ENCODE measurements at regions of chr10 and their contacts with region 1.

Region 1: DNA sequence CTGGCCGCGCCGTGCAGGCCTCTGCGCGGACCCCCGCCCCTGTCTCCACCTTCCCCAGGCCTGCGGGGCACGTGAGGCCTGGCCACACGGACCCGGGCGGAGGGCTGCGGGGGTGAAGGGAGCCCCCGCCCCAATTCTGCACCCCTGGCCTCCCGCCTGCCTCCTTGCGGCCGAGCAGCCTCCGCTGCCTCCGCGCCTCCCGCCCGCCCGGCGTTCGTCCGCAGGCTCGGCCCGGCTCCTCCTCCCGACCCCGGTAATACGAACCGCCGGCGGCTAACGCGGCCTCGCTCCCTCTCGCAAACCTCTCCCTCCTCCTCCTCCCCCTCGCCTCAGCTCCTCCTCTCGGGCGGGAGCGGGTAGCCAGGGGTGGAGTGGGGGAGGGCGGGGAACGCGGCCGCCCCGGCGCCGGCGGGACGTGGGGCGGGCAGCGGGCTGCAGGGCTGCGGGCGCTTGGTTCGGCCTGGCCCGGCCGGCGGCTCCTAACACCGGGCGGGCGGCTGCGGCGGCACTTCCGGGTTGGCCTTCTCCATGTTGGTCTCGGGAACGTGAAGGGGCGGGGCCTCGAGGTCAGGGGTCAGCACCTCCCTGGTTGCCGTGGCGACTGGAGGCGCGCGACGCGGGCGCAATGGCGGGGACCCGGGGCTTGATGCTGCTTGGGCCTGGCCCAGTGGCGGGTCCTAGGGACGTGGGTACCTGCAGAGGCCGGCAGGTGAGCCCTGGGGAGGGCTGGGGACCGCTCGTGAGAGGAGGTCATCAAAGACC is at the start of gene RAB11FIP2:
- DNase-seq: peak; percentile 97
- H3K4me3 Mint-ChIP-seq: peak within 1 kb of the TSS; percentile 86
- H3K27ac Mint-ChIP-seq: peak within 1 kb of the TSS; percentile 72
- H3K4me1 Mint-ChIP-seq: peaks cover 37% of the 10 kb centered on the region
- H3K27me3 Mint-ChIP-seq: no peaks in the 10 kb centered on the region
- total RNA-seq, gene RAB11FIP2: 9.9 to 11.6 TPM

Region 2: DNA sequence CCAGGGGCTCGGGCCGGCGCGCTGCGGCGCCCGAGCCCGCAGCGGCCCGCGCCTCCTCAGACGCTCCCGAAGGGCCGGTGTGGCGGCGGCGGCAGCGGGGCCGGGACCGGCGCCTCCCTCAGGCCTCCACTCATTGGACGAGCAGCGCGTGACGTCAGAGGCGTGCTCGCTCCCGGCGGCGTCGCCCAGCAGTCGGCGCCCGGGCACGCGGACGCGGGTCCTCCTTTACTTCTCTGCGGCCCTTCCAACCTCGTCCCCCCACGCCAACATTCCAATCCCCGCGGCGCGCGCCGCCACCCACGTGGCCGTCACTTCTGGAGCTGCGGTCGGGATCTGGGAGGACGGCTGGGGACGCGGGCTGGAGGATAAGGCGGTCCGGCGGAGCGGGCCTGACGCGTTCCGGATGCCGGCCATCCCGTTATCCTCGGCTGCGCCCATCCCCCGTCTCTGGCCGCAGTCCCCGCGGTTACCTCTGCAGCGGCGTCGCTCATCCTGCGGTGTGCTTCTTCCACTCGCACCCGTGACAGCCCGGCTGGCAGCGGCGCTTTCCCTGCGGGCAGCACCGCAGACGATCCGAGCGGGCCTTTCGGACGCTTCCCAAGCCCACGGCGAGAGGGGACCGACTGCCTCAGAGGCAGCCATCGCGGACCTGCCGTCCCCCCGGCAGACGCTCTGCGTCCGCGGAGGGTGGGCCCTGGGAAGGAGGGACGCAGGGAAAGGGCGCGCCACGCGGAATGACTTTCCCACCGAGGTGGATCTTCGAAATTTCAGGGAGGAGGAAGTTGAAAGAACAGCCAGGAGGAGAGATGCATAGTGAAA is 671.0 kb before region 1 on chr10 and contains the start of gene PDZD8:
- CTCF ChIA-PET with region 1: interaction called, 4 read pairs
- intact Hi-C with region 1: loop called (anchors 2 kb)
- DNase-seq: peak; percentile 85
- H3K4me3 Mint-ChIP-seq: peak within 1 kb of the TSS; percentile 94
- H3K27ac Mint-ChIP-seq: peak within 1 kb of the TSS; percentile 68
- H3K4me1 Mint-ChIP-seq: peaks cover 19% of the 10 kb centered on the region
- H3K27me3 Mint-ChIP-seq: peaks cover 18% of the 10 kb centered on the region
- total RNA-seq, gene PDZD8: 13.6 to 15.8 TPM

Region 3: DNA sequence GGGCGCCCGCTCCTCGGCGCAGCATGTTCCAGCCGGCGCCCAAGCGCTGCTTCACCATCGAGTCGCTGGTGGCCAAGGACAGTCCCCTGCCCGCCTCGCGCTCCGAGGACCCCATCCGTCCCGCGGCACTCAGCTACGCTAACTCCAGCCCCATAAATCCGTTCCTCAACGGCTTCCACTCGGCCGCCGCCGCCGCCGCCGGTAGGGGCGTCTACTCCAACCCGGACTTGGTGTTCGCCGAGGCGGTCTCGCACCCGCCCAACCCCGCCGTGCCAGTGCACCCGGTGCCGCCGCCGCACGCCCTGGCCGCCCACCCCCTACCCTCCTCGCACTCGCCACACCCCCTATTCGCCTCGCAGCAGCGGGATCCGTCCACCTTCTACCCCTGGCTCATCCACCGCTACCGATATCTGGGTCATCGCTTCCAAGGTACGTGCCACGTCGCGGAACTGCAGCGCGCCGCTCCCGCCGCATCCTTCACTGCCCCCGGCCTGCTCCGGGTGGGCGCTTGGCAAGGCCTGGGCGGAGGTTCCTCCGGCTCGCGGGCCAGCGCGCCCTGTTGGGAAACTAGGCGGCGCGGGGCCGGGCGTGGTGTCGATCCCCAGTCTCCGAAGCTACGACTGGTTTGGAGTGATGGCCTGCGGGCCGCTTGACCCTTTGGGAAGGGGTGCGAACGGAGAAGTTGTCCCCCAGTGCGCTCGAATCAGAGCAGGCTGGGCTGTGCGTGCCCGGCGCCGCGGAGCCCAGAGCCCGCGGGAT is 503.2 kb before region 1 on chr10:
- CTCF ChIA-PET with region 1: no interaction called
- intact Hi-C with region 1: loop called (anchors 5 kb)
- DNase-seq: peak; percentile 39
- H3K4me3 Mint-ChIP-seq: peak overlapping the region; percentile 53
- H3K27ac Mint-ChIP-seq: no peak overlapping the region
- H3K4me1 Mint-ChIP-seq: peaks cover 44% of the 10 kb centered on the region
- H3K27me3 Mint-ChIP-seq: peaks cover 76% of the 10 kb centered on the region

Region 4: DNA sequence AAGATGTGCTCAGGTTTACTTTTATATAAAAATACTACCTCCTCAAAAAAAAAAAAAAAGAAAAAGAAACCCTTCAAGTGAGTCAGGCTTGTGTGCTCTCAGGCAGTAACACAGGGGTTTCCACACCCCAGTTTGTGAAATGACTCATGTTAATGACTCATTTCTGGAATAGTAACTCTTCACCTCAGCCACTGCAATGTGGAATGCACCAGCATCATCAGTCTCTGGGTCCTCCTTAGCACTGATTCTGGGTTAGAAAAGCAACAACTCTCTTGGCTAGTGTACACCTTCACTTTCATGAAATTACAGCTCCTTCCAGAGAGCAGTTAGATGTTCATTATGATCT is 393.4 kb before region 1 on chr10:
- CTCF ChIA-PET with region 1: no interaction called
- intact Hi-C with region 1: loop called (anchors 10 kb)
- DNase-seq: peak; percentile 65
- H3K4me3 Mint-ChIP-seq: no peak overlapping the region
- H3K27ac Mint-ChIP-seq: no peak overlapping the region
- H3K4me1 Mint-ChIP-seq: peaks cover 25% of the 10 kb centered on the region
- H3K27me3 Mint-ChIP-seq: peaks cover 26% of the 10 kb centered on the region

Region 5: GRCh38 chr10:117830787-117831212 is 215.8 kb before region 1 on chr10:
- CTCF ChIA-PET with region 1: no interaction called
- intact Hi-C with region 1: loop called (anchors 5 kb)
- DNase-seq: peak; percentile 49
- H3K4me3 Mint-ChIP-seq: peak overlapping the region; percentile 68
- H3K27ac Mint-ChIP-seq: peak overlapping the region; percentile 82
- H3K4me1 Mint-ChIP-seq: peaks cover 12% of the 10 kb centered on the region
- H3K27me3 Mint-ChIP-seq: peaks cover 2% of the 10 kb centered on the region

Region 6: DNA sequence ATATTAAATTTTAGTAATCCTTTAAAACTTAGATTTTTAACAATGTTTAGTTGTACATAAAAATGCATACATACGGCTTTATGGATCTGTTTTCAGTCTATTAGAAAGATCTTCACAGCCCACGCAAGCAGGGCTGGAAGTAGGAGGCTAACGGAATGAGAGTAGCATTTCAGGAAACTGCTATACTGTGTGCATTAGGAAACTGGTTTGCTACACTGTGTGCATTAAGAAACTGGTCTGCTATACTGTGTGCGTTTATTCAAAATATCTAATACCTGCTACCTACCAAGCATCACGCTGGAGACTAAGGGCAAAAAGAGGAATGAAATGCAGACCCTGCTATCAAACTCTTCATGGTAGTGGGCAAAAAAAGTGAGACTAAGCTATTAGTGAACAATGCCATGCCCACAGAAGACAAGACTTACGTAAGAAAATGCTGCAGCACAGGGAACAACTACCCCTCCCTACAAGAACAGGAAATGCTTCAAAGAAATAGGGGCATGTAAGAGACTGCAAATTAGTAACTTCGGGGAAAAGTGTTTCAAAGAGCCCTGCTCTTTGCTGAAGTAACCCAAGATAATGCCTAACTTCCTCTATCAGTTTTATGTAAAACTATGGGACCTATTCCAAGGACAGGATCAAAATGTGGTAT is 11.1 kb before region 1 on chr10:
- CTCF ChIA-PET with region 1: no interaction called
- intact Hi-C with region 1: loop called (anchors 1 kb)
- DNase-seq: no peak
- H3K4me3 Mint-ChIP-seq: no peak overlapping the region
- H3K27ac Mint-ChIP-seq: no peak overlapping the region
- H3K4me1 Mint-ChIP-seq: peaks cover 30% of the 10 kb centered on the region
- H3K27me3 Mint-ChIP-seq: no peaks in the 10 kb centered on the region

Region 7: GRCh38 chr10:118341791-118342637 is 295.4 kb after region 1 on chr10 and contains the start of gene FAM204A:
- CTCF ChIA-PET with region 1: no interaction called
- intact Hi-C with region 1: loop called (anchors 1 kb)
- DNase-seq: peak; percentile 98
- H3K4me3 Mint-ChIP-seq: peak within 1 kb of the TSS; percentile 95
- H3K27ac Mint-ChIP-seq: peak within 1 kb of the TSS; percentile 86
- H3K4me1 Mint-ChIP-seq: peaks cover 41% of the 10 kb centered on the region
- H3K27me3 Mint-ChIP-seq: no peaks in the 10 kb centered on the region
- total RNA-seq, gene FAM204A: 60.5 to 67.1 TPM

Region 8: GRCh38 chr10:118511711-118512110 is 465.1 kb after region 1 on chr10:
- CTCF ChIA-PET with region 1: no interaction called
- intact Hi-C with region 1: no loop called
- DNase-seq: no peak
- H3K4me3 Mint-ChIP-seq: no peak overlapping the region
- H3K27ac Mint-ChIP-seq: no peak overlapping the region
- H3K4me1 Mint-ChIP-seq: peaks cover 2% of the 10 kb centered on the region
- H3K27me3 Mint-ChIP-seq: peaks cover 9% of the 10 kb centered on the region

Measured in activated naive CD4-positive, alpha-beta T cell treated with anti-CD3 and anti-CD28 coated beads for 36 hours (primary cell).